ENCODE measurements at regions of chr1 and their contacts with region 1.

Region 1: DNA sequence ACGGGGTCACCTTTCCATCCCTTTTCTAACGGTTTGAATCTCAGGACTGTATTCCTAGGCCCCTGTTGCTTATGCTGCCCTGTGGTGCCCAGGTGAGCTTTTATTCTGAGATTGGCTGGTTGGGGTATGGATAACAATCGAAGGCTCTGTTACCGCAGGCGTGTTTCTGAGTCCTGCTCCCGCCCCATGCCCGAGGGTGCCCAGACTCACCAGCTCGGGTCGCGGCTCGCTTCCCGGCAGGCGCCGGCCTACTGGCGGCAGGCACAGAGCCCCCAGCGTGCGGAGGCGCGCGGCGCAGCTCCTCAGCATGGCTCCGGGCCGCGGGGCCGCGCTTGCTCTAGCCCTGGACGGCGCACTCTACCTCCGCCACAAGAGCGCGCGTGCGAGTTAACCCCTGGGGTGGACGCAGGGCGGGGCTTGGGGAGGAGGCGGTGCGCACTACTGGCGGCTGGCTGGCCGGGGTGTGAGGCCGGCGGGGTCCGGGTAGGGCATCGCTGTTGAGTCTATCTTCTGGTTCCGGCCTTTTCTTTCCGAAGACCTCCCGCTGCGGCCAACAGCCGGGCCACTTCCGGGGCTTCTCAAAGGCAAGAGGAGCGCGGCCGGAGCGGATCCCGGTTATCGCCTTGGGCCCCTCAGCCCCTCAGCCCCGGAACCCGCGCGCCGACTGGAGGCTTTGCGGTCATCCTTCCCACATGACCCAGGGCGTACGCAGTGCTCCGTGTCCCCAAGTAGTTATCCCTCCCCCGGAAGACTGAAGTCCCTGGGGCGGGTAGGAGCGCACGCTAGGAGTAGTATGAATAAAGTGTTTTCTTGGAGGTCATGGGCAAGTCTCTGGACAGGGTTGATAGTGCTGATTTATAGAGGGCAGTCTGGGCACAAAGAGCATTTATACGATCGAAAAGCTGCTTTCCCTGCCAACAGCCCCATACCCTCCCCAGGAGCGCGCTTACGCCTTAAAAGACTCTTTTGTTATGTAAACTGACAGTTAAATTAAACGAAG is at the start of gene THEM4:
- DNase-seq: peak; percentile 95 to 98 (median 96)
- ATAC-seq: peak; percentile 92
- H3K4me3 ChIP-seq: peak within 1 kb of the TSS; percentile 63
- H3K27ac ChIP-seq: peak within 1 kb of the TSS; percentile 96
- H3K4me1 ChIP-seq: peaks cover 13 to 21% of the 10 kb centered on the region in 2 experiments
- H3K27me3 ChIP-seq: no peaks in the 10 kb centered on the region
- CTCF ChIP-seq: peak; percentile 35 to 46 (median 41); a peak in 5 of 6 replicates
- EP300 ChIP-seq: peak; percentile 46
- POLR2A ChIP-seq: peak; percentile 92
- RAD21 ChIP-seq: peak in 1 of 2 experiments; percentile 35; a peak in 1 of 4 replicates
- polyA plus RNA-seq, gene THEM4: 8.6 to 12.5 TPM

Region 2: GRCh38 chr1:150118716-150119115 is 1790.7 kb before region 1 on chr1:
- CTCF ChIA-PET with region 1: no interaction called
- POLR2A ChIA-PET with region 1: no interaction called
- in situ Hi-C with region 1: loop called (anchors 10 kb)
- intact Hi-C with region 1: no loop called
- DNase-seq: no peak
- ATAC-seq: no peak
- H3K4me3 ChIP-seq: no peak overlapping the region
- H3K27ac ChIP-seq: no peak overlapping the region
- H3K4me1 ChIP-seq: no peaks in the 10 kb centered on the region
- H3K27me3 ChIP-seq: no peaks in the 10 kb centered on the region
- CTCF ChIP-seq: no peak
- EP300 ChIP-seq: no peak
- POLR2A ChIP-seq: no peak
- RAD21 ChIP-seq: no peak

Region 3: GRCh38 chr1:151361913-151362815 is 547.3 kb before region 1 on chr1:
- CTCF ChIA-PET with region 1: no interaction called
- POLR2A ChIA-PET with region 1: no interaction called
- in situ Hi-C with region 1: no loop called
- intact Hi-C with region 1: no loop called
- DNase-seq: peak in 1 of 4 experiments; percentile 33
- ATAC-seq: peak; percentile 50; the same call in 2 of the 3 replicates
- H3K4me3 ChIP-seq: no peak overlapping the region
- H3K27ac ChIP-seq: no peak overlapping the region
- H3K4me1 ChIP-seq: no peaks in the 10 kb centered on the region
- H3K27me3 ChIP-seq: no peaks in the 10 kb centered on the region
- CTCF ChIP-seq: no peak
- EP300 ChIP-seq: no peak
- POLR2A ChIP-seq: no peak
- RAD21 ChIP-seq: no peak

Region 4: GRCh38 chr1:151898513-151898991 is 10.9 kb before region 1 on chr1:
- CTCF ChIA-PET with region 1: no interaction called
- POLR2A ChIA-PET with region 1: interaction called, 21 read pairs
- in situ Hi-C with region 1: no loop called
- intact Hi-C with region 1: no loop called
- DNase-seq: no peak
- ATAC-seq: peak; percentile 39; the same call in 2 of the 3 replicates
- H3K4me3 ChIP-seq: no peak overlapping the region
- H3K27ac ChIP-seq: peak overlapping the region; percentile 5; the same call in 1 of the 3 replicates
- H3K4me1 ChIP-seq: peaks cover 12 to 18% of the 10 kb centered on the region in 2 experiments
- H3K27me3 ChIP-seq: no peaks in the 10 kb centered on the region
- CTCF ChIP-seq: no peak
- EP300 ChIP-seq: no peak
- POLR2A ChIP-seq: no peak
- RAD21 ChIP-seq: no peak

Measured in K562 (cell line).